CD4-positive, alpha-beta T cell (primary cell): ENCODE measurements at regions of chr16 and their contacts with region 1.

Region 1: DNA sequence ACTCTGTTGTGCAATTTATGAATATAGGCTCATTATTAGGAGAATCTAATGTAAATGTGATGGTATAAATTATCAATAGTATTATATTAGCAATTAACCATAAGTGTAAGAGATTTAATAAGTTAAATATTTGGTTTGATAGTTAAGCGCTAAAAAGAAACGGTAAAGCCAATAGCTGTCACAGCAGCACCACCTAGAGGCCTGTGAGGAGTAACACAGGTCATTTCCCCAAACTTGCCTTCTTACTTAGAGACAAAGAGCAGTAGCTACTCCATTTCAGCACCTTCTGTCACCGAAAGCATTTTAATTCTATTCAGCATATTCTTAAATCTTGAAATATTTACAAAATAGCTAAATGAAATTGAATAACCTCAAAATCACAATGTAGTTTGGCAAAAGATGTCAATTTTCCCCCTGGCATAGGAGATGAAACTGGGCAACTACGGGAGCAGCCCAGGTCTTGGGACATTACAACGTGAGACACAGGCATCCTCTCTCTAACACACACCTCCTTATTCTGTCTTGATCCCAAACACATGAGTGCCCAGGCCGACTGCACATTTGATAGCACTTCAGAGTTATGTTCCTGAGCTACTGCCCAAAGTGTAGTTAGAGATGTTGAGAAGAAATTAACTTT is 14.2 kb upstream of the DYNLRB2 start:
- DNase-seq: peak; percentile 30 to 81 (median 44)
- ATAC-seq: peak; percentile 81
- H3K4me3 ChIP-seq: no peak overlapping the region
- H3K4me3 Mint-ChIP-seq: no peak overlapping the region
- H3K27ac ChIP-seq: no peak overlapping the region
- H3K27ac Mint-ChIP-seq: no peak overlapping the region
- H3K4me1 ChIP-seq: no peaks in the 10 kb centered on the region
- H3K4me1 Mint-ChIP-seq: no peaks in the 10 kb centered on the region
- H3K27me3 ChIP-seq: no peaks in the 10 kb centered on the region
- H3K27me3 Mint-ChIP-seq: no peaks in the 10 kb centered on the region
- CTCF ChIP-seq: peak; percentile 96

Region 2: DNA sequence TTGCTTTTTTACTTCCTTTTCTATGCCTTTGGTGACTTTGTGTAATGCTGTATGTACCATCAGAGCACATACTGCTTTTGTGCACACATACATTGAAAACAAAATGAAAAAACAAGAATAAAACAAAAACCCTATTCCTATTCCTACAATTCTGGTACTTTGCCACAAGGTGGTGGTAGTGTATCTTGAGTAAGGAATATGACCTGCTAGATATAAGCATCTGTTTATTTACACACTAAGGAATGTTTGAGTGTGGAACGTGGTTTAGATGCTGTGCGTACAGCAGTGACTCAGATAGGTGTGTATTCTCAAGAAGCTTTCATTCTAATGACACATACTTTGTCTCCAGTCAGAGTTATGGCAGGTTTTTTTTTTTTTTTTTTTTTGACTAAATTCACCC is 1820.8 kb before region 1 on chr16:
- CTCF ChIA-PET with region 1: no interaction called
- POLR2A ChIA-PET with region 1: no interaction called
- intact Hi-C with region 1: loop called in 1 of 2 experiments (anchors 10 kb)
- DNase-seq: peak in 4 of 14 experiments; percentile 13 to 65 (median 60)
- ATAC-seq: peak; percentile 58
- H3K4me3 ChIP-seq: no peak overlapping the region
- H3K4me3 Mint-ChIP-seq: no peak overlapping the region
- H3K27ac ChIP-seq: no peak overlapping the region
- H3K27ac Mint-ChIP-seq: no peak overlapping the region
- H3K4me1 ChIP-seq: no peaks in the 10 kb centered on the region
- H3K4me1 Mint-ChIP-seq: no peaks in the 10 kb centered on the region
- H3K27me3 ChIP-seq: no peaks in the 10 kb centered on the region
- H3K27me3 Mint-ChIP-seq: no peaks in the 10 kb centered on the region
- CTCF ChIP-seq: peak; percentile 50

Region 3: DNA sequence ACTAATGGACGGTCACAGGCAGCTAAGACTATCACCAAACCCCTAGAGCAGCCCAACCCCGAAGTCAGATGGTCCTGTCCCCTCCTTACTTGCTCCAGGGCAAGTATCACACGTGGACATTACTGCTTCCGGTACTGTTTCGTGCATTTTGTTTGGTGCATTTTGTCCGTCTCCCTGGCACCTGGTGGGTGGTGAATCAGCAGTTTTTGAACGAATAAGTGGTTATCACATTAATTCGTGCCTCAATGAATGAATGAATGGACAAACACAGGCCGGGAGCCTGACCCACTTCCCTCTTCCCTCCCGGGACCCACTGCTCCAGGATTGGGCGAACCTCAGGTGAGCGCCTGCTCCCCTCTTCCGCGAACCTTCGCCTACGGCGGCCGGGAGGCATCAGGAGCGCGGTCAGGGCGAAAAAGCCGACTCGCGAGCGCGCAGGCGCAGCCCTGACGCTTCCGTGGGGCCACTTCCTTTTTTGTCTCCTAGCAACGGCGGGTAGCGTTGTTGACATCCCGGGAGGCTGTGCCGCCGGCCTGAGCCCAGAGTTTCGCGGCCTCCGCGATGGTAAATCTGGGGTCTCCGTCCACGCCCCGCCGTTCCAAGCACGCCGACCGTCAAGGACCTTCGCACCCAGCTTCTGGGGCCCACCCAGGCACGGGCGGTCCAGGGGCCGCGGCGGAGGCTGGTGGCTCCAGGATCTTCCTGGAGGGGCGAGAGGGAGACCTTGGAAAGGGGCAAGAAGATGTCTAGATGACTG is 14.2 kb after region 1 on chr16 and contains the start of gene DYNLRB2:
- CTCF ChIA-PET with region 1: interaction called, 14 read pairs
- POLR2A ChIA-PET with region 1: no interaction called
- intact Hi-C with region 1: no loop called
- DNase-seq: peak; percentile 85 to 97 (median 89)
- ATAC-seq: peak; percentile 91
- H3K4me3 ChIP-seq: peak within 1 kb of the TSS; percentile 62
- H3K4me3 Mint-ChIP-seq: peak within 1 kb of the TSS; percentile 93
- H3K27ac ChIP-seq: peak within 1 kb of the TSS; percentile 36 to 62
- H3K27ac Mint-ChIP-seq: peak within 1 kb of the TSS; percentile 94
- H3K4me1 ChIP-seq: peaks cover 11% of the 10 kb centered on the region
- H3K4me1 Mint-ChIP-seq: peaks cover 17% of the 10 kb centered on the region
- H3K27me3 ChIP-seq: no peaks in the 10 kb centered on the region
- H3K27me3 Mint-ChIP-seq: peaks cover 4% of the 10 kb centered on the region
- CTCF ChIP-seq: no peak
- total RNA-seq, gene DYNLRB2: 0.31 TPM in 1 of 2 experiments, not detected in the other

Region 4: GRCh38 chr16:80580109-80580832 is 53.7 kb after region 1 on chr16:
- CTCF ChIA-PET with region 1: interaction called, 11 read pairs
- POLR2A ChIA-PET with region 1: no interaction called
- intact Hi-C with region 1: no loop called
- DNase-seq: peak; percentile 36 to 82 (median 46)
- ATAC-seq: peak; percentile 92
- H3K4me3 ChIP-seq: peak overlapping the region; percentile 13
- H3K4me3 Mint-ChIP-seq: peak overlapping the region; percentile 52
- H3K27ac ChIP-seq: peak overlapping the region; percentile 60 to 64
- H3K27ac Mint-ChIP-seq: peak overlapping the region; percentile 80
- H3K4me1 ChIP-seq: peaks cover 38% of the 10 kb centered on the region
- H3K4me1 Mint-ChIP-seq: peaks cover 31% of the 10 kb centered on the region
- H3K27me3 ChIP-seq: no peaks in the 10 kb centered on the region
- H3K27me3 Mint-ChIP-seq: no peaks in the 10 kb centered on the region
- CTCF ChIP-seq: no peak

Region 5: GRCh38 chr16:80693553-80693952 is 167.0 kb after region 1 on chr16:
- CTCF ChIA-PET with region 1: no interaction called
- POLR2A ChIA-PET with region 1: no interaction called
- intact Hi-C with region 1: no loop called
- DNase-seq: no peak
- ATAC-seq: no peak
- H3K4me3 ChIP-seq: no peak overlapping the region
- H3K4me3 Mint-ChIP-seq: no peak overlapping the region
- H3K27ac ChIP-seq: no peak overlapping the region
- H3K27ac Mint-ChIP-seq: no peak overlapping the region
- H3K4me1 ChIP-seq: no peaks in the 10 kb centered on the region
- H3K4me1 Mint-ChIP-seq: peaks cover 43% of the 10 kb centered on the region
- H3K27me3 ChIP-seq: no peaks in the 10 kb centered on the region
- H3K27me3 Mint-ChIP-seq: no peaks in the 10 kb centered on the region
- CTCF ChIP-seq: no peak

Region 6: DNA sequence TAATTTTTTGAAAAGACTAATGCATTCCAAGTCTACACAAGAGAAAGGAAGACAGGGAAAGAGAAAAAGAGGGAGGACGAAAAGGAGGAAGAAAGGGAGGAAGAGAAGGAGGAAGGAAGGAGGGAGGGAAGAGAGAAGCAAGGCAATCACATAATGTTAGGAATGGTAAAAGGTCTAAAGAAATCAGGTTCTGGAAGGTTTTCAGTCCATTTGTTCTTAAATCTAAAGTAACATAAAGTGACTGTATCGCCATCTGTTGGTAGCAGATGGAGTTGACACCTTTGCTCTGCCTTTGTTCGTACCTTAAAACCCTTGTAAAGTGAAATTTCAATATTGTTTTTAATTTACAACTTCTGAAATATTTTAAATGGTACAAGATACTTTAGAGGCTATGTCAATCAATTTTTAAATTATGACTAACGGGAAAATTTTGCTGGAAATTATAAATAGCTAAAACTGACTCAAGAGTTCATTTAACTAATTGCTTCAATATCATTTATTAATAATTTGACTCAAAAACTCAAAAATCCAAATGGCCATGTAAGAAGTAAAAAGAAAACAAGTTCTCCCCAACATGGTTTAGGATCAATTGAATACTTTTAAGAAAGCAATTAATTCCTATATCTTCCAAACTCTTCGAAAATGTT is 298.3 kb after region 1 on chr16:
- CTCF ChIA-PET with region 1: interaction called, 3 read pairs
- POLR2A ChIA-PET with region 1: no interaction called
- intact Hi-C with region 1: loop called (anchors 1 to 5 kb)
- DNase-seq: peak in 11 of 14 experiments; percentile 8 to 78 (median 29)
- ATAC-seq: peak; percentile 44
- H3K4me3 ChIP-seq: no peak overlapping the region
- H3K4me3 Mint-ChIP-seq: no peak overlapping the region
- H3K27ac ChIP-seq: no peak overlapping the region
- H3K27ac Mint-ChIP-seq: no peak overlapping the region
- H3K4me1 ChIP-seq: no peaks in the 10 kb centered on the region
- H3K4me1 Mint-ChIP-seq: no peaks in the 10 kb centered on the region
- H3K27me3 ChIP-seq: peaks cover 4 to 7% of the 10 kb centered on the region in 2 experiments
- H3K27me3 Mint-ChIP-seq: peaks cover 9% of the 10 kb centered on the region
- CTCF ChIP-seq: peak; percentile 95